SK-N-SH (cell line): ENCODE measurements at regions of chr1 and their contacts with region 1.

Region 1: DNA sequence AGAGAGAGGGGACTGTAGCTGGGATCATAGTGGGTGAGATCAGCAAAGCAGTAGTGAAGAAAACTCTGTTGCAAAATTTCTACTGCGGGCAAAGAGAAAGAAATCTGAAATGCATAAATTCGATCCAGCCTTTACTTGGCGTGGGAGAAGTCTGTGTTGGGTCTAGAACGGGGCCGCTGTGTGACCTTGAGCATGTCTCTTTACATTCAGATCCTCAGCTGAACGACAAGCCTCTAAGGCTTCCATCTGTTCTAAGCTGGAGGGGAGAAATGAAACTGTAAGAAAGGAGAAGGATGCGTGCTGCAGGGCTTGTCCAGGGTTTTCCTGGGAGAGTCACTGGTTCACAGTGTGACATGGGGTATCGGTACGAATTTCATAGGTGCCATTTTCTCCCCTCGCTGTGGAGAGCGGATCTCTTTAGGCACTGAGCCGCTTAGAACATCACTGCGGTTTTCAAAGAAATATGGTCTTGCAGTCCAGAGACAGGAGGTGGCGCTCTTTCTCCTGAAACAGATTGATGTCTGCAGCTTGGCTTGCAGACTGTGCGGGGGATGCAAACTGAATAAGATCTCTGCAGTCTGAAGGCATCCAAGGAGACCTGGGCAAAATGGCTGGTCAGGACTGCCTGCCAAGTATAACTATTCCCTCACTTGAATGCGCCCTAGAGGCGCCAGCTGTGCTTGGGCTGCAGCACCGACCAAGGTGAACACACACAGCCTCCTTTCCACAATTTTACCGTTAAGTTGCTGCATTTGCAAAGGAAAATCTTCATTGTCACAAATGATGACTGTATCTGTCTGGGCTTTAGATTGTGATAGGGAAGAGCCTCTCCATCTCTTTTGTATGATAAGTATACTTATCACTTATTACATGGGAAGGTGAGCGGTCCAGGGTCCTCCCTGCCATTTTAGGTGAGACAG is 104.1 kb downstream of the XCL2 start:
- DNase-seq: peak; percentile 72
- H3K4me3 ChIP-seq: peak overlapping the region; percentile 34 to 38
- H3K27ac ChIP-seq: peak overlapping the region in 1 of 2 experiments; percentile 86; a peak in 3 of 4 replicates
- H3K4me1 ChIP-seq: peaks cover 0 to 11% of the 10 kb centered on the region in 2 experiments; a peak in 2 of 4 replicates
- H3K27me3 ChIP-seq: no peaks in the 10 kb centered on the region
- CTCF ChIP-seq: peak; percentile 90
- EP300 ChIP-seq: peak; percentile 15 to 21; a peak in 2 of 4 replicates
- RAD21 ChIP-seq: peak; percentile 99

Region 2: GRCh38 chr1:167862432-167863076 is 577.2 kb before region 1 on chr1:
- CTCF ChIA-PET with region 1: no interaction called
- POLR2A ChIA-PET with region 1: no interaction called
- DNase-seq: no peak
- H3K4me3 ChIP-seq: no peak overlapping the region
- H3K27ac ChIP-seq: peak overlapping the region in 1 of 2 experiments; percentile 30; a peak in 2 of 4 replicates
- H3K4me1 ChIP-seq: no peaks in the 10 kb centered on the region
- H3K27me3 ChIP-seq: no peaks in the 10 kb centered on the region
- CTCF ChIP-seq: no peak
- EP300 ChIP-seq: no peak
- RAD21 ChIP-seq: no peak

Region 3: GRCh38 chr1:168428063-168428731 is 11.5 kb before region 1 on chr1:
- CTCF ChIA-PET with region 1: interaction called, 41 read pairs
- POLR2A ChIA-PET with region 1: no interaction called
- DNase-seq: peak; percentile 18
- H3K4me3 ChIP-seq: no peak overlapping the region
- H3K27ac ChIP-seq: peak overlapping the region; percentile 37 to 94; a peak in 3 of 4 replicates
- H3K4me1 ChIP-seq: peaks cover 0 to 14% of the 10 kb centered on the region in 2 experiments; a peak in 2 of 4 replicates
- H3K27me3 ChIP-seq: no peaks in the 10 kb centered on the region
- CTCF ChIP-seq: no peak
- EP300 ChIP-seq: peak in 1 of 2 experiments; percentile 82; a peak in 2 of 4 replicates
- RAD21 ChIP-seq: no peak

Region 4: GRCh38 chr1:168452329-168452728 is 12.6 kb after region 1 on chr1:
- CTCF ChIA-PET with region 1: interaction called, 70 read pairs
- POLR2A ChIA-PET with region 1: no interaction called
- DNase-seq: no peak
- H3K4me3 ChIP-seq: no peak overlapping the region
- H3K27ac ChIP-seq: no peak overlapping the region
- H3K4me1 ChIP-seq: peaks cover 2 to 15% of the 10 kb centered on the region in 2 experiments
- H3K27me3 ChIP-seq: no peaks in the 10 kb centered on the region
- CTCF ChIP-seq: peak; percentile 34
- EP300 ChIP-seq: no peak
- RAD21 ChIP-seq: no peak

Region 5: DNA sequence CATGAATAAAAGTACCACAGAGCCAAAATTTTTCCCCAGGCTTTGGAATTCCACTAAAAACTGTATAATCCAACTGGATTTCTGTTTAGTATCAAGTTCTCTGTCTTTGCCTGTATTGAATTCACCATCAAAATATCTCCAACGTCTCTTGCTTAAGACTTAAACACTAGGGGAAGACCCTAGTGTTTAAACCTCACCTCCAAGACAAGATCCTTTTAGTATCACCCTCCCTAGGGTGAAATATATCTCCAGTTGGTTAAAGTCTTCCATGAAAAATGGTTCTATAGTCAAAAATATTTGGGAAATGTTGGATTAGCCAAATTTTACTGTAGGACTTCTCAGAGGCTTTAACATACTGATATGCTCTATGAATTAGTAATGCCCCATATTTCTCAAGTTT is 128.6 kb after region 1 on chr1:
- CTCF ChIA-PET with region 1: interaction called, 20 read pairs
- POLR2A ChIA-PET with region 1: no interaction called
- DNase-seq: no peak
- H3K4me3 ChIP-seq: no peak overlapping the region
- H3K27ac ChIP-seq: no peak overlapping the region; a peak in 1 of 4 replicates
- H3K4me1 ChIP-seq: no peaks in the 10 kb centered on the region; a peak in 1 of 4 replicates
- H3K27me3 ChIP-seq: no peaks in the 10 kb centered on the region
- CTCF ChIP-seq: no peak
- EP300 ChIP-seq: no peak
- RAD21 ChIP-seq: no peak

Region 6: DNA sequence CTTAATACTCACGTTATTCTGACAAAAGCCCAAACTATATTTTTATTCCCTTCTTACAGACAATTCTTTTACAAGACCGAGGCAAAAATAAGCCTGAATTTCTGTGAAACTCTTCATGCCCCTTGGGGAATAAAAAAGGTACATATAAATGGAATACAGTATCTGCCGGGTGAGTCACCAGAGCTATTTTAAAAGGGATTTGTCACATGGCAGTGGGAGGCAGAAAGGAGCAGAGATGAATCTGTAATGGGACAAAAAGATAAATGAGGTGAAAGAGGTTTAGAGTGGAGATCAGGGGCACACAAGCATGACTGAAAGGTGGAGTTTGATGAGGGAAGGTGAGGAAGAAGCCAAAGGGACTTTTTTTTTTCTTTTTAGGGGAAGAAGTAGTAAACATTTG is 145.5 kb after region 1 on chr1:
- CTCF ChIA-PET with region 1: interaction called, 21 read pairs
- POLR2A ChIA-PET with region 1: no interaction called
- DNase-seq: no peak
- H3K4me3 ChIP-seq: no peak overlapping the region
- H3K27ac ChIP-seq: peak overlapping the region; percentile 32 to 69; a peak in 2 of 4 replicates
- H3K4me1 ChIP-seq: peaks cover 0 to 10% of the 10 kb centered on the region in 2 experiments; a peak in 2 of 4 replicates
- H3K27me3 ChIP-seq: no peaks in the 10 kb centered on the region
- CTCF ChIP-seq: no peak
- EP300 ChIP-seq: no peak
- RAD21 ChIP-seq: no peak